GM12878 (cell line): ENCODE measurements at regions of chr2 and their contacts with region 1.

Region 1: DNA sequence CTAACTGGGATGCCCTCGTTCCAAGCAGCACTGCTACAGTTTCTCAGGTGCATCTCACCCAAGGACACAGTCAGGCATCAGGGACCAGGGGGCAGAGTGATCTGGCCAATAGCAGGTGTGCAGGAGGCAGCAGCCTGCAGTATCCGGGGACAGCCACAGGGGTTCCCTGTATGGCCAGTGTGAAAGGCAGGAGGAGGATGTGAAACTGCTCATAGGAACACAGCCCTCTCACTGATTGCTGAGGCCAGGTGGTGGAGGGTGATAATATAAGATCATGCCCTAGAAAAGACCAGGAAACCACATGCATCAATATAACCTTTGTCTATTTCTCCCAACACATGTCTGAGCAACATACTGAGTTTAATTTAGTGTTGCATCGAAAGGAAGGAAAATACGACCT is 112.7 kb upstream of the TACR1 start:
- DNase-seq: peak; percentile 89
- ATAC-seq: peak; percentile 100
- H3K4me3 ChIP-seq: no peak overlapping the region
- H3K27ac ChIP-seq: no peak overlapping the region
- H3K4me1 ChIP-seq: peaks cover 9% of the 10 kb centered on the region
- H3K27me3 ChIP-seq: no peaks in the 10 kb centered on the region
- CTCF ChIP-seq: peak; percentile 84 to 89 (median 85)
- EP300 ChIP-seq: peak; percentile 28 to 76; a peak in 3 of 4 replicates
- POLR2A ChIP-seq: no peak
- RAD21 ChIP-seq: peak; percentile 79

Region 2: GRCh38 chr2:74982577-74982976 is 329.4 kb before region 1 on chr2:
- CTCF ChIA-PET with region 1: no interaction called
- POLR2A ChIA-PET with region 1: no interaction called
- RAD21 ChIA-PET with region 1: no interaction called
- SMC1A ChIA-PET with region 1: no interaction called
- in situ Hi-C with region 1: no loop called
- intact Hi-C with region 1: no loop called
- DNase-seq: no peak
- ATAC-seq: peak; percentile 50; the same call in 2 of the 3 replicates
- H3K4me3 ChIP-seq: no peak overlapping the region
- H3K27ac ChIP-seq: no peak overlapping the region
- H3K4me1 ChIP-seq: no peaks in the 10 kb centered on the region
- H3K27me3 ChIP-seq: no peaks in the 10 kb centered on the region
- CTCF ChIP-seq: peak in 2 of 3 experiments; percentile 29 to 40; a peak in 3 of 6 replicates
- EP300 ChIP-seq: no peak
- POLR2A ChIP-seq: no peak
- RAD21 ChIP-seq: peak; percentile 37

Region 3: DNA sequence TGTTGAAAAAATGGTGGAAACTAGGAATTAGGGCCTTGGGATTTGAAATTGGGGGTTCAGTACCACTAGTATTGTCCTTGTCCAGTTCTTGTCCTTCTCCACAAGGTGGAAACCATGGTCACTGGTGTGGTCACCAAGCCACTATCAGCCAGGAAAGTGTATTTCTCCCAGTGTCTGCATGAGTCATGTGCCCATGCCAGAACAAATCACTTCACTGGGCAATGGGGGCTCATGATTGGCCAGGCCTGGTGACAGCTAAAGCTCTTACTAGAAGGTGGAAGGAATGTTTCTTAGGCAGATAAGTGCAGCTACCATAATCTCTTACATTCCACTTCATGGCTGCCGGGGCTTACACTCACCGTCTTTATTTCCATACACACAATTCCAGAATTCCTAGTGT is 12.1 kb after region 1 on chr2:
- CTCF ChIA-PET with region 1: interaction called, 3 read pairs
- POLR2A ChIA-PET with region 1: no interaction called
- RAD21 ChIA-PET with region 1: interaction called, 6 read pairs
- SMC1A ChIA-PET with region 1: interaction called, 18 read pairs
- in situ Hi-C with region 1: no loop called
- intact Hi-C with region 1: no loop called
- DNase-seq: no peak
- ATAC-seq: no peak
- H3K4me3 ChIP-seq: no peak overlapping the region
- H3K27ac ChIP-seq: no peak overlapping the region
- H3K4me1 ChIP-seq: no peaks in the 10 kb centered on the region; the same call in 1 of the 2 replicates
- H3K27me3 ChIP-seq: no peaks in the 10 kb centered on the region
- CTCF ChIP-seq: no peak
- EP300 ChIP-seq: no peak
- POLR2A ChIP-seq: no peak
- RAD21 ChIP-seq: no peak

Region 4: DNA sequence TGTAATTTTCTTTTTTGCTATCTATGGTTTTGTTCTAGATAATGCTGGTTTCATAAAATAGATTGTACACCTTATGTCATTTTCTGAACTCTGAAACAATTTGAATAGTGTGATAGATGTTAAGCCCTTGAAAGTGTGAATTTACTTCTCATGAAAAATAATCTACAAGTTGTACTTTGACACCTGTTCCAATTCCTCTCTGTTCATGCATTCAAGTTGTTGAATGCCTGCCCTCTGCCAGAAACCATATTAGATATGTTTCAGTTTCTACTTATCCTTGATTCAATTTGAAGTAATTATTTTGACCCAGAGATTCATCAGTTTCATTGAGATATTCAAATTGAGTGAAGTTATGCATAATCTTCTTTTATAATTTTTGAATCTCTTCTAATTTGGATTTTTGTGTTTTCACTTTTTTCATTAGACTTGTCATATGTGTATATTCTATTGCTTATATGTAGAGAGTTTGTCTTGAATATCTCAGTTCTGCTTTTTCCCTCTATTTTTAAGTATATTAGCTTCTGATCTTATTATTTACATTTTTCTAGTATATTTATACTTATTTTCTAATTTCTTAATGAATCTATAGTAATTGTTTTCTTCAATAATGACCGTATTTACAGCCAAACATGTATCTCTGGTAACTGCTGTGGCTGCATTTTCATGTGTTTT is 30.6 kb after region 1 on chr2:
- CTCF ChIA-PET with region 1: interaction called, 3 read pairs
- POLR2A ChIA-PET with region 1: no interaction called
- RAD21 ChIA-PET with region 1: interaction called, 4 read pairs
- SMC1A ChIA-PET with region 1: interaction called, 19 read pairs
- in situ Hi-C with region 1: no loop called
- intact Hi-C with region 1: no loop called
- DNase-seq: peak; percentile 35
- ATAC-seq: peak; percentile 85
- H3K4me3 ChIP-seq: no peak overlapping the region
- H3K27ac ChIP-seq: no peak overlapping the region
- H3K4me1 ChIP-seq: no peaks in the 10 kb centered on the region
- H3K27me3 ChIP-seq: no peaks in the 10 kb centered on the region
- CTCF ChIP-seq: no peak
- EP300 ChIP-seq: no peak
- POLR2A ChIP-seq: no peak
- RAD21 ChIP-seq: no peak